ENCODE measurements at regions of chr16 and their contacts with region 1.

Region 1: DNA sequence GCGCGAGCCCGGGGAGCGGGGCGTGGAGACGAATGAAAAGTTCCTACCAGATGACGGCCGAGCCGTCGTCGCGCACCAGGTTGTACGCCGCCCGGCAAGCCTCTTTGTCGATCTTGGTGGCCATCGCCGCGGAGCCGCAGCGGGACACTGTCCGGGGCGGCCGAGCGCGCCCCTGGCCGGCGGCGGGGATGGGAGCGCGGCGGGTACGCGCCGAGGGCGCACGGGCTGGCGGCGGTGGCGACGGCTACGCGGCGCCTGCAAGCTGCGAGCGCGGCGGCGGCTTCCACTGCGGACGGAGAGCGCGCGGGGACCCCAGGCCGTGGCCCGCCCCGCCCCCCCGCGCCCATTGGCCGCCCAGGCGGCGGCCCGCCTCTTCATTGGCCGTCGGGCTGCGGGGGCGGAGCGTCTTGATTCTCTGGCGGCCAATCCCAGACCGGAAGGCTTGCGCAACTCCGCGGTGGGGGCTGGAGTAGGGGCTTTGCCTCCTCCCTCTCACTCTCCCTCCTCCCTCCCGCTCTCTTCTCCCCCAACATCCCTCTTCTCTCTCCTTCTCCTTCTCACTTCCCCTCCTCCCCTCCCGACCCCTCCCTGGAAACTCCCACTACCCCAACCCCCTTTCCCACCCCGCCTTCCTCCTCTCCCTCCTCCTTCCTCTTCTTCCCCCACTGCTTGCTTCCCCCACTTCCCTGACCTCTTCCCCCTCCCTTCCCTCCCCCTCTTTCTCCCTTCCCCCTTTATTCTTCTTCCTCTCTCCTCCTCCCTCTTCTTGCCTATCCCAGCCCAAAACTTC is at the start of gene COTL1:
- DNase-seq: peak; percentile 96
- CTCF ChIP-seq: no peak

Region 2: GRCh38 chr16:84599521-84600202 is 18.3 kb before region 1 on chr16:
- CTCF ChIA-PET with region 1: interaction called, 43 read pairs
- POLR2A ChIA-PET with region 1: interaction called, 5 read pairs
- DNase-seq: peak; percentile 71
- CTCF ChIP-seq: no peak

Region 3: GRCh38 chr16:84635699-84636098 is 17.7 kb after region 1 on chr16:
- CTCF ChIA-PET with region 1: interaction called, 21 read pairs
- POLR2A ChIA-PET with region 1: no interaction called
- DNase-seq: no peak
- CTCF ChIP-seq: no peak

Region 4: GRCh38 chr16:84672276-84673202 is 54.6 kb after region 1 on chr16:
- CTCF ChIA-PET with region 1: interaction called, 10 read pairs
- POLR2A ChIA-PET with region 1: no interaction called
- DNase-seq: peak; percentile 89
- CTCF ChIP-seq: peak; percentile 92

Region 5: DNA sequence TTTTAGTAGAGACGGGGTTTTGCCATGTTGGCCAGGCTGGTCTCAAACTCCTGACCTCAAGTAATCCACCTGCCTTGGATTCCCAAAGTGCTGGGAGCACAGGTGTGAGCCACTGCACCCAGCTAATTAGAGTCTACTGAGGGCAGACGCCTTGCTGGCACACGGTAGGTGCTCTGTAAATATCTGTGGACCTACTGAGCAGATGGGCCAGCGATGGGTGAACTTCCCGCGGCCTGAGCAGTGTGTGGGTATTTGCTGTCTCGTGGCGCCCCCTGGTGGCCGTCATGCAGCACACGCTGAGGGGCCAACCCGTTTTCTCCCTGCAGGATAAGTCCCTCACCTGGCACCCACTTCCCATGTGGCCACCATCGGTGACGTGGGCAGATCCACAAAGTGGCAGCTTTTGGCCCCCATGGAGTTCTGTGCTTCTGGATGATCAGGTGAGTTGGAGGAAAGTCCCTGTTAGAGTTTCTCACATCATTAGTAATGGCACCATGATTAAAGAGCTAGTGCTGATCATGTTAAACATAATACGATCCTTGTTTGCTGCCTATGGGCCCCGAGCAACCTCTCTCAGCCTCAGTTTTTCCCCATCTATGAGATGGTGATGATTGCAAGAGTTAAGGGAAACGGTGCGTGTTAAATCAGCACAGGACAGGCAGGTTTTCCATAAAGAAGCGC is 352.6 kb after region 1 on chr16:
- CTCF ChIA-PET with region 1: interaction called, 30 read pairs
- POLR2A ChIA-PET with region 1: no interaction called
- DNase-seq: peak; percentile 85
- CTCF ChIP-seq: peak; percentile 90